HEK293 (cell line): ENCODE measurements at regions of chr20 and their contacts with region 1.

Region 1: DNA sequence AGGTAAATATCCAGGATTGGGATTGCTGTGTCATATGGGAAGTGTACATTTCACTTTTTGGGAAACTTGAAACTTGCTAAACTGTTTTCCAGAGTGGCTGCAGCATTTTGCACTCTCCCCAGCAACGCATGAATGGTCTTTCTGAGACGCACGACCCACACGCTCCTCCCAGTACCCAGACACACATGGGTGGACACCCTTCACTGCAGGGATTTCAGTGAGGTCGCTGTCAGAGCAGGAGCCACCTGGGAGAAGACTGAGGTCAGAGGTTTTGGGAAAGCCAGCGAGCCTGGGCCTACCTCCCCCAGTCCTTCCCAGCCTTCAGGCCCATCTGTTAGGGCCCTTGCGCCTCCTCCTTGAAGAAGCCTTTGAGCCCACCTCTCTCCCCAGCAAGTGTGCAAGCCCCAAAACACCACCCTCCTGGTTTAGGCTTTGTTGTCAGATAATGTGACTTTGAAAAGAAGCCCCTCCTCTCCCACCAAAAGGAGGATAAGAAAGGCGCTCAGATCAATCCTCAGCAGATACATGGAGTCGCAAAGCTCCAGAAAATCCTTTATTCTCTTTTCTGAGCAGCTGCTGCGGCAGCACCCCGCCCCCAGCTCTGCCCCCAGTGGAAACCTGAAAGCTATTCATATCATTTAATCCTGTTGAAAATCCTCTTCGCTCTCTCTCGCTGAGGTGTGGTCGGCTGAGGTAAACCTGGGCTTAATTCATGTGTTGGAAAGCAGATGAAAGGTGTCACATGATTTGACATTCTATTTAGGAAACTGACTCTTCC is 12.7 kb upstream of the JAG1 start:
- H3K4me3 ChIP-seq: no peak overlapping the region
- H3K27ac ChIP-seq: no peak overlapping the region
- H3K4me1 ChIP-seq: no peaks in the 10 kb centered on the region
- CTCF ChIP-seq: no peak

Region 2: DNA sequence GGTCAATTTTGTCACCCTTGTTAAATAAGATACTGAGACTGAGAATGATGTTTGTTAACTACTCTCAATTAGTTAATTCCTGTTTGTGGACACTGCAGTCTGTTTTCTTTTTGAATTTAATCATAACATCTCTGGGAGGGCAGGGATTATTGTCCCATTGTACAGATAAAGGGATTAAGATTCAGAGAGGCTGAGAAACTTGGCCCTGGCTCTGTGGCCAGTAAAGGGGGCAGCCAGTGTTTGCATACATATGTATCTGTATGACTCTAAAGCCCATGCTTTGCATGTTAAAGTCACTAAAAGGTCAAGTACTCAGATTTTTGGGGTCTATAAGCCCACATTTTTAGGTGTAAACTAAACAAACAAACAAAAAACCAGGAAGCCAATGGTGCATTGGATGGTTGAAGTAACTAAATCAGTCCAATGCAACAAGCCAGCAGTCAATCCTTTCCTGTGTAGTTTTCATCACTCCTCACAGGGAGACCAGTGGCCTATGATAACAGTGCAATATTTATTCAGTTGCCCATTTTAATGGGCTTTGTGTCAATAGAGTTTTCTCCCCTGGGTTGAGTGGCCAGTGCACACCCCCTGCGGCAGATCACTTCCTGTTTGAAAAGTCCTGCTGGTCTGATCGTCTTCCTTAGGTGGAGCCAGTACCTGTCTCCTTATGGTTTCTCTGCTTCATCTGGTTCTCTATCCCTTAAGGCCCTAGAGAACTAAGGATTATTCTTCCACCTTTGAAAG is 144.7 kb before region 1 on chr20:
- CTCF ChIA-PET with region 1: no interaction called
- POLR2A ChIA-PET with region 1: no interaction called
- H3K4me3 ChIP-seq: no peak overlapping the region
- H3K27ac ChIP-seq: no peak overlapping the region
- H3K4me1 ChIP-seq: peaks cover 11% of the 10 kb centered on the region
- CTCF ChIP-seq: no peak

Region 3: GRCh38 chr20:10696650-10697049 is 10.1 kb after region 1 on chr20:
- CTCF ChIA-PET with region 1: interaction called, 10 read pairs
- POLR2A ChIA-PET with region 1: no interaction called
- H3K4me3 ChIP-seq: no peak overlapping the region
- H3K27ac ChIP-seq: no peak overlapping the region
- H3K4me1 ChIP-seq: no peaks in the 10 kb centered on the region
- CTCF ChIP-seq: 0 out of 2 replicates have a peak, but pooled peaks have one; percentile 23